CD8-positive, alpha-beta T cell (primary cell): ENCODE measurements at regions of chr17 and their contacts with region 1.

Region 1: DNA sequence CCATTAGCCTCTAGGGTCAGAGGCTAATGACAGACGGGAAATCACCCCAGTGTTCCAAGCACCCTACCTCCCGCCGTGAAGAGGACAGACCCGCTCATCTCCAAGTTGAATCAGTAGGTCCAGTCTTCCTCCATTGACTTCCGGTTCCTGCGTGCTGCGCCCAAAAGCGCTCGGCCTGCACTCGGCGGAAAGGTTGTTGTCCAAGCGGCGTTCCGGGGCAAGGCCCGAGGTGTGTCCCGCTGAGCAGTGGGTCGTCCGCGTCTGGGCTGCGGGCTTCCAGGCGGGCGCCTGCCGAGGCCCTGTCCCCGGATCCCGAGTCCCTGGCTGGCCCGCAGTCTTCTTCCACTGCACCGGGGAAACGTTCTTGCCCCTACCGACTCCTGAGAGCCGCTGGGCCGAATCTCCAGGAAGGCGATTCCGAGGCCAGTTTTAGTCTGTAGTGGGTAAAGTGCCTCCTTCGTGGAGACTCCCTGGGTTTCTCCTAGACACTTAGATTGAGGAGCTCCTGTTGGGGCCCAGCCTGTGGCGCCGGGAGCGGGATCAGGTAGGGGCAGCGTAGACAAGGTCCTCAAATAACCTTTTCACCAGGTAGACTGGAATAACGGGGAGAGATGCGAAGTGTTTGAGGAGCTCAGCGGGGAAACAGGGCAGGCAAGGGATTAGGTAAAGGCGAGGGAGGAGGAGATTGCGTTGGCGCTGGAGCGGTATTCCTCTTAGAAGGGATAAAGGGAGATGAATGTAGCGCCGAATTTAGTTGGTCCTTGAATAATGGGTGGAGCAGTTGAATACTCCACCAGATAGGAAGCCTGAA is at the start of gene TEFM:
- DNase-seq: peak; percentile 77 to 94 (median 85)
- ATAC-seq: peak; percentile 96
- H3K4me3 ChIP-seq: peak within 1 kb of the TSS; percentile 88
- H3K4me3 Mint-ChIP-seq: peak within 1 kb of the TSS; percentile 94
- H3K27ac ChIP-seq: peak within 1 kb of the TSS; percentile 78 to 85
- H3K27ac Mint-ChIP-seq: peak within 1 kb of the TSS; percentile 92
- H3K4me1 ChIP-seq: peaks cover 14% of the 10 kb centered on the region
- H3K4me1 Mint-ChIP-seq: peaks cover 45% of the 10 kb centered on the region
- H3K27me3 ChIP-seq: no peaks in the 10 kb centered on the region
- H3K27me3 Mint-ChIP-seq: no peaks in the 10 kb centered on the region
- CTCF ChIP-seq: no peak
- total RNA-seq, gene TEFM: 8.4 to 8.9 TPM

Region 2: GRCh38 chr17:30831663-30832437 is 74.5 kb before region 1 on chr17 and contains the start of gene ATAD5:
- CTCF ChIA-PET with region 1: no interaction called
- POLR2A ChIA-PET with region 1: no interaction called
- intact Hi-C with region 1: loop called in 1 of 2 experiments (anchors 5 kb)
- DNase-seq: peak; percentile 70 to 94 (median 88)
- ATAC-seq: peak; percentile 99
- H3K4me3 ChIP-seq: peak within 1 kb of the TSS; percentile 80 to 95
- H3K4me3 Mint-ChIP-seq: peak within 1 kb of the TSS; percentile 97
- H3K27ac ChIP-seq: peak within 1 kb of the TSS in 1 of 2 experiments; percentile 41
- H3K27ac Mint-ChIP-seq: peak within 1 kb of the TSS; percentile 89
- H3K4me1 ChIP-seq: peaks cover 19% of the 10 kb centered on the region
- H3K4me1 Mint-ChIP-seq: peaks cover 23% of the 10 kb centered on the region
- H3K27me3 ChIP-seq: no peaks in the 10 kb centered on the region
- H3K27me3 Mint-ChIP-seq: no peaks in the 10 kb centered on the region
- CTCF ChIP-seq: no peak
- total RNA-seq, gene ATAD5: 3.6 to 3.8 TPM

Region 3: GRCh38 chr17:30970831-30971567 is 64.7 kb after region 1 on chr17 and contains the start of gene RNF135:
- CTCF ChIA-PET with region 1: no interaction called
- POLR2A ChIA-PET with region 1: no interaction called
- intact Hi-C with region 1: loop called in 1 of 2 experiments (anchors 1 kb)
- DNase-seq: peak; percentile 16 to 76 (median 52)
- ATAC-seq: peak; percentile 73
- H3K4me3 ChIP-seq: peak within 1 kb of the TSS; percentile 62 to 70
- H3K4me3 Mint-ChIP-seq: peak within 1 kb of the TSS; percentile 95
- H3K27ac ChIP-seq: peak within 1 kb of the TSS; percentile 26 to 32
- H3K27ac Mint-ChIP-seq: peak within 1 kb of the TSS; percentile 82
- H3K4me1 ChIP-seq: no peaks in the 10 kb centered on the region
- H3K4me1 Mint-ChIP-seq: peaks cover 27% of the 10 kb centered on the region
- H3K27me3 ChIP-seq: no peaks in the 10 kb centered on the region
- H3K27me3 Mint-ChIP-seq: peaks cover 17% of the 10 kb centered on the region
- CTCF ChIP-seq: no peak
- total RNA-seq, gene RNF135: 0.79 to 1.5 TPM